Activated CD4-positive, alpha-beta T cell treated with anti-CD3 and anti-CD28 coated beads for 36 hours (primary cell): ENCODE measurements at regions of chr6 and their contacts with region 1.

Region 1: GRCh38 chr6:8102122-8102958 is at the start of gene EEF1E1:
- DNase-seq: peak; percentile 99
- ATAC-seq: peak; percentile 98
- H3K4me3 Mint-ChIP-seq: peak within 1 kb of the TSS; percentile 88
- H3K27ac Mint-ChIP-seq: peak within 1 kb of the TSS; percentile 96
- H3K4me1 Mint-ChIP-seq: peaks cover 24% of the 10 kb centered on the region
- H3K27me3 Mint-ChIP-seq: peaks cover 15% of the 10 kb centered on the region
- total RNA-seq, gene EEF1E1: 73.4 to 74.6 TPM

Region 2: DNA sequence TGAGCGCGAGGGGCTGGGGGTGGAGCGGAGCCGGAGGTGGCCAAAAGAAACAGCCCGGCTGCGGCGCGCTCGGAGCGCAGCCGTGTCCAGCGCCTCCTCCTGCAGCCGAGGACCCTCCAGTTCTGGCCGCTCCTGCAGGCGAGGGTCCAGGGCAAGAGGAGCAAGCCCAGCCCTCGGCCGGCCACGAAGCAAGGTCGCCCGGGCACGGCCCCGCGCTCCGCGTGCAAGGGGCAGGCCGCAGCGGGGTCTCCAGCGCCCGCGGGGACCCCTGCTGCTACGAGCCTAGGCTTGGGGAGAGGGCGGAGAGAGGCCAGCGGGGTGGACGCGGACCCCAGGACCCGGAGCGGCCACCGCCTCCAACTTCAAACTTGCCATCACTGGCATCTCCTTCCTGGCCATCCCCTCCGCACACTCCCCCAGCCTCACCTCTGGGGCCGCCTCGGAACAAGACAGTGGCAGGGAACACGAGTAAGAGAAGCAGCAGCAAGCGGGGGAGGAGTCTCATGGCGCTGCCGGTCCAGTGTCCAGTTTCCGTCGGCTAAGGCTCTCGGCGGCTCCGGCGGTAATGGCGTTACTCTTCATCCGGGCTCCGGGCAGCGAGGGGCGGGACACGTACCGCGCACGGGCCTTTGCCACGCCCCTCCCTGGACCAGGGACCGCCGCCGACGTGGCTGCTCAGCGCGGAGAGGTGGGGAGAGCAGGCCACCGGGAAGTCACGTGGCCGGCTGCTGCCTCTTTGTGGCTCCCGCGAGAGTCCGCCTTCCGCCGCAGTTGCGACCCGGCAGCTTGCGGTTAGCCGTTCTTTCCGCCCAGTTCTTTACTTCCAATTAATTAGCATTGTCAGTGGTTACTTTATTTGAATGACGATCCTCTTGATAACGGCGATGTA is 789.5 kb before region 1 on chr6 and contains the start of gene SSR1:
- CTCF ChIA-PET with region 1: no interaction called
- POLR2A ChIA-PET with region 1: no interaction called
- intact Hi-C with region 1: loop called in 1 of 2 experiments (anchors 1 kb)
- DNase-seq: peak; percentile 97
- ATAC-seq: peak; percentile 97
- H3K4me3 Mint-ChIP-seq: peak within 1 kb of the TSS; percentile 99
- H3K27ac Mint-ChIP-seq: peak within 1 kb of the TSS; percentile 98
- H3K4me1 Mint-ChIP-seq: peaks cover 45% of the 10 kb centered on the region
- H3K27me3 Mint-ChIP-seq: no peaks in the 10 kb centered on the region
- total RNA-seq, gene SSR1: 129 to 165 TPM

Region 3: GRCh38 chr6:7910654-7911344 is 191.5 kb before region 1 on chr6 and contains the start of gene TXNDC5:
- CTCF ChIA-PET with region 1: no interaction called
- POLR2A ChIA-PET with region 1: no interaction called
- intact Hi-C with region 1: loop called in 1 of 2 experiments (anchors 1 kb)
- DNase-seq: peak; percentile 83
- ATAC-seq: peak; percentile 87
- H3K4me3 Mint-ChIP-seq: peak within 1 kb of the TSS; percentile 91
- H3K27ac Mint-ChIP-seq: peak within 1 kb of the TSS; percentile 76
- H3K4me1 Mint-ChIP-seq: peaks cover 15% of the 10 kb centered on the region
- H3K27me3 Mint-ChIP-seq: no peaks in the 10 kb centered on the region
- total RNA-seq, gene TXNDC5: 44.4 to 52.8 TPM

Region 4: GRCh38 chr6:8017276-8017701 is 85.1 kb before region 1 on chr6:
- CTCF ChIA-PET with region 1: no interaction called
- POLR2A ChIA-PET with region 1: no interaction called
- intact Hi-C with region 1: loop called in 1 of 2 experiments (anchors 5 kb)
- DNase-seq: peak; percentile 24
- ATAC-seq: peak; percentile 95
- H3K4me3 Mint-ChIP-seq: peak overlapping the region; percentile 77
- H3K27ac Mint-ChIP-seq: peak overlapping the region; percentile 97
- H3K4me1 Mint-ChIP-seq: peaks cover 18% of the 10 kb centered on the region
- H3K27me3 Mint-ChIP-seq: no peaks in the 10 kb centered on the region

Region 5: DNA sequence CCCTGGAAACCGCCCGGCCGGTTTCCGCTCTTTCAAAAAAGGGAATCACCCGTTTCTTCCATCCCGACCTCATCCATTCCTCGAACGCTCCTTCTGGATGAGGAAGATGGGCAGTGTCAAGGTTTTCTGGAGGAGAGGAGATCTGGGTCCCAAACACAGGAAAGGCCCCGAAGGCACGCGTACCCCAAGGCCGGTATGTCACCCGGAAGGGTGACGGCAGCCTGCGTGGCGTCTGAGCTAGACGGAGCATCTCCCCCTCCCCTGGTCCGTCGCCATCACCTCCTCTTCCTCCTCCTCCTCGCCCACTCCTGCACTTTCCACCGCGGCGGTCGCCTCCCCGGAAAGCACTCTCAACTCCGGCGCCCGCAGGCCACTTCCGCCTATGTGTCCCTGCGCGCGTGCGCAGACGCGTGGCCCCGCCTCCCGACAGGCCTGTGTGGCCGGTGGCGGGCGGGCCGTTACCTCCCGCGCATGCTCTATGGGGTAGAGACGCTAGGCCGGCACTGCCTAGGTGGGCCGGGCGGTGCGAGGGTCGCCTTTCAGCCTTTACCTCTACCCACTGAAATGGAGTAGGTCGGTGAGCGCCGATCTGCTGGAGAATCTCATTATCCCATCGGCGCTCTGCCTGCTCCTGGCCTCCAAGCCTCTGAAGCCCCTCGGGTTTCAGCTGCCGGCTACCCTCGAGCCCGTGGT is 333.0 kb after region 1 on chr6 and contains the start of gene SLC35B3:
- CTCF ChIA-PET with region 1: no interaction called
- POLR2A ChIA-PET with region 1: no interaction called
- intact Hi-C with region 1: loop called in 1 of 2 experiments (anchors 1 kb)
- DNase-seq: peak; percentile 99
- ATAC-seq: peak; percentile 95
- H3K4me3 Mint-ChIP-seq: peak within 1 kb of the TSS; percentile 92
- H3K27ac Mint-ChIP-seq: peak within 1 kb of the TSS; percentile 95
- H3K4me1 Mint-ChIP-seq: peaks cover 38% of the 10 kb centered on the region
- H3K27me3 Mint-ChIP-seq: no peaks in the 10 kb centered on the region
- total RNA-seq, gene SLC35B3: 4.9 to 6.7 TPM